ENCODE measurements at regions of chr5 and their contacts with region 1.

Region 1: GRCh38 chr5:174418928-174419796 is 305.2 kb upstream of the MSX2 start:
- DNase-seq: peak; percentile 83
- H3K4me3 ChIP-seq: no peak overlapping the region
- H3K27ac ChIP-seq: no peak overlapping the region
- H3K4me1 ChIP-seq: no peaks in the 10 kb centered on the region
- H3K27me3 ChIP-seq: peaks cover 13% of the 10 kb centered on the region
- CTCF ChIP-seq: peak; percentile 87

Region 2: GRCh38 chr5:174355208-174355612 is 64.0 kb before region 1 on chr5:
- CTCF ChIA-PET with region 1: no interaction called
- POLR2A ChIA-PET with region 1: no interaction called
- intact Hi-C with region 1: no loop called
- DNase-seq: peak; percentile 12
- H3K4me3 ChIP-seq: no peak overlapping the region
- H3K27ac ChIP-seq: no peak overlapping the region
- H3K4me1 ChIP-seq: no peaks in the 10 kb centered on the region
- H3K27me3 ChIP-seq: peaks cover 5% of the 10 kb centered on the region
- CTCF ChIP-seq: no peak

Region 3: GRCh38 chr5:174735498-174736330 is 316.6 kb after region 1 on chr5:
- CTCF ChIA-PET with region 1: no interaction called
- POLR2A ChIA-PET with region 1: no interaction called
- intact Hi-C with region 1: loop called (anchors 1 kb)
- DNase-seq: no peak
- H3K4me3 ChIP-seq: no peak overlapping the region
- H3K27ac ChIP-seq: no peak overlapping the region
- H3K4me1 ChIP-seq: no peaks in the 10 kb centered on the region
- H3K27me3 ChIP-seq: peaks cover 67% of the 10 kb centered on the region
- CTCF ChIP-seq: peak; percentile 52

Region 4: GRCh38 chr5:174793684-174794328 is 374.6 kb after region 1 on chr5:
- CTCF ChIA-PET with region 1: interaction called, 18 read pairs
- POLR2A ChIA-PET with region 1: no interaction called
- intact Hi-C with region 1: loop called (anchors 1 kb)
- DNase-seq: peak; percentile 73
- H3K4me3 ChIP-seq: no peak overlapping the region
- H3K27ac ChIP-seq: no peak overlapping the region
- H3K4me1 ChIP-seq: no peaks in the 10 kb centered on the region
- H3K27me3 ChIP-seq: peaks cover 21% of the 10 kb centered on the region
- CTCF ChIP-seq: peak; percentile 92

Region 5: GRCh38 chr5:174935854-174936474 is 516.8 kb after region 1 on chr5:
- CTCF ChIA-PET with region 1: no interaction called
- POLR2A ChIA-PET with region 1: no interaction called
- intact Hi-C with region 1: loop called (anchors 1 kb)
- DNase-seq: peak; percentile 53
- H3K4me3 ChIP-seq: no peak overlapping the region
- H3K27ac ChIP-seq: no peak overlapping the region
- H3K4me1 ChIP-seq: no peaks in the 10 kb centered on the region
- H3K27me3 ChIP-seq: peaks cover 3% of the 10 kb centered on the region
- CTCF ChIP-seq: peak; percentile 81

Measured in A673 (cell line).